Naive thymus-derived CD4-positive, alpha-beta T cell (primary cell): ENCODE measurements at regions of chr1 and their contacts with region 1.

Region 1: DNA sequence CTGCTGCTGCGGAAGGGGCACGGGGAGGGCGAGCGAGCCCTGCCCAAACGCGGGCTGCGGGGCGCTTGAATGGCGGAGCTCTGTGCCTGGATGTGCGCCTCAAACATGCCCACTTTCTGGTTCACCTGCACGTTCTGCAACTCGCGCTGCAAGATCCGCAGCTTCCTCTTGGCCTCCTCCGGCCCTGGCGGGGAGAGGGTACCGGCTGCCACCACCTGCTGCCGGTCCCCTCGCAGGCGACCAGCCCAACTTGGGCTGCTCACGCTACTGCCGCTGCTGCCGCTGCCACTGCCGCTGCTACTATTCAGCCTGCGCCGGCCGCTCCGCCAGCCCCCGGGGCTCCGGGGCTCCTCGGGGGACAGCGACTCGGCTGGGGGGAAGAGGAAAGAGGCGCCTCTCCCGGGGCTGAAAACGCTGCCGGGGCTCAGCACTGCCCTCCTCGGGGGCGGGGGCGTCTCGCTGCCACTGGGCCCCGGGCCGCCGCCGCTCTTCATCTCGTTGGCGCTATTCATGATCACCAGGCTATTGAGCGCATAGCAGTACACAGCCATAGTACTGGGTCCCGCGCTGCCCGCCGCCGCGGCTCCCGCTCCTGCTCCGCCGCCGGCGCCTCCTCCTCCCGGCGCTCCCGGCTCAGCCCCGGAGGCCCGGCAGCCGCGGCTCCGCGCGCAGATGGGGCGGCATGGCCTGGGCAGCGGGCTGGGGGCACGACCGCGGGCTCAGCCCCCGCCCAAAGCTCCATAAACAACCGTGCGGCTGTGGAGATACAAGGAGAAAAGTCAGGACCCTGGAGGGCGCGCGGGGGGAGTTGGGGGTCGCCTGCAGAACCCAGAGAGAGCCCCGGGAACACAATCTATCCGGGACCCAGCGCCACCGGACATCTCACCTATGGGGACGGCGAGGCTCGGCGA is 1.9 kb downstream of the ITPKB start:
- DNase-seq: peak in 7 of 9 donors; percentile 45 to 66 (median 59)
- ATAC-seq: peak; percentile 51
- H3K4me3 ChIP-seq: peak overlapping the region; percentile 99
- H3K4me3 Mint-ChIP-seq: peak overlapping the region; percentile 89 to 99 (median 93)
- H3K27ac ChIP-seq: peak overlapping the region; percentile 92
- H3K27ac Mint-ChIP-seq: peak overlapping the region; percentile 81 to 99 (median 97)
- H3K4me1 ChIP-seq: peaks cover 22 to 38% of the 10 kb centered on the region in 2 donors
- H3K4me1 Mint-ChIP-seq: peaks cover 14 to 54% (median 35%) of the 10 kb centered on the region in 7 donors
- H3K27me3 ChIP-seq: no peaks in the 10 kb centered on the region
- H3K27me3 Mint-ChIP-seq: no peaks in the 10 kb centered on the region

Region 2: DNA sequence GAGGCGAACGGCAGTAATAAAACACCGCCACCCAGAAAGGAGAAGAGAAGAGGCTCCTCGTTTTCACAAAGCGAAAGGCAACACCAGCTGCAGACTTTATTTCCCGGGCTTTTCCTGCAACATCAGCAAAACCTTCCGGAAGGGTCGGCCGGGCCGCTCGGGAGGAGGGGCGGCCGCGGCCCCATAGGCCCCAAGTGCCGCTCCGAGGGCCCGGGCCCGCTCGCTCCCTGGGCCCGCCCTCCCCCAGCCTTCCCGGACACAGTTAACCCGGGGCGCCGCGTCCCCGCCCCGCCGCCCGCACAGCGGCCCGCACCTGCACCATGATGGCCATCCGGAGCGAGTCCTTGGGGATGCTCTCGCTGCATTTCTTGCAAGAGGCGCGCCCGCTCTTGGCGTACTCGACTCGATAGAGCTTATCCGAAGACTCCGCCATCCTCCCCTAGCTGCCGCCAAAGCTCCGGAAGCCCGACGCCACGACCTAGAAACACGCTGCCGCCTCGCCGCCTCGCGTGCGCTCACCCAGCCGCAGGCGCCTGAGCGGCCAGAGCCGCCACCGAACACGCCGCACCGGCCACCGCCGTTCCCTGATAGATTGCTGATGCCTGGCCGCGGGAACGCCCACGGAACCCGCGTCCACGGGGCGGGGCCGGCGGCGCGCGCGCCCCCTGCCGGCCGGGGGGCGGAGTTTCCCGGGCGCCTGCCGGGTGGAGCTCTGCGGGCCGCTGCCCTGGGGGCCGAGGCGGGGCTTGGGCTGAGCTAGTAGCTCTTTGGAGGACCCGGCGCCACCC is 329.5 kb before region 1 on chr1 and contains the start of gene PARP1:
- CTCF ChIA-PET with region 1: no interaction called
- POLR2A ChIA-PET with region 1: interaction called, 3 read pairs
- intact Hi-C with region 1: loop called (anchors 5 kb)
- DNase-seq: peak; percentile 83 to 93 (median 89)
- ATAC-seq: peak; percentile 94
- H3K4me3 ChIP-seq: peak within 1 kb of the TSS; percentile 82
- H3K4me3 Mint-ChIP-seq: peak within 1 kb of the TSS; percentile 89 to 99 (median 94)
- H3K27ac ChIP-seq: peak within 1 kb of the TSS; percentile 74
- H3K27ac Mint-ChIP-seq: peak within 1 kb of the TSS; percentile 68 to 96 (median 93)
- H3K4me1 ChIP-seq: peaks cover 23 to 30% of the 10 kb centered on the region in 2 donors
- H3K4me1 Mint-ChIP-seq: peaks cover 37 to 46% (median 40%) of the 10 kb centered on the region in 7 donors
- H3K27me3 ChIP-seq: no peaks in the 10 kb centered on the region
- H3K27me3 Mint-ChIP-seq: peaks cover 0 to 3% (median 0%) of the 10 kb centered on the region in 5 donors
- total RNA-seq, gene PARP1: 63.6 to 165 (median 89.3) TPM

Region 3: DNA sequence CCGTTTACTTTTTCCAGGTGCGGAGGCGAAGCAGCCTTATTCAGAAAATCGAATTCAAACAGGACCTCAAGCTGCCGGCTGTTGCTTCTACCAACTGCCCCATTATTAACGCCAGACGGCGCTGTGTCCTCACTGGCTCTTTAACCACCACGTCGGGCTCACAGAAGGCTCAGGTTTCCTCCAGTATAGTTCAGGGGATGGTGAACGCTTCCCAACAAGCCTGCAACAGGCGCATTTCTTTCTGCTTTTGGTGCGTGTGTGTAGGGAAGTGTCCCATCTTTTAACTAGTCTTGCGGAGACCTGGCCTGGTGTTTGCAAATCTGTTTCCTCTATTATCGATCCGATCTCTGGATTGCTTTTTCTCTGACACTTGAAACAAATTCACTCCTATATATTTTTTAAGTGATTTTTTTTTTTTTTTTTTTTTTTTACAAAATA is 189.4 kb before region 1 on chr1:
- CTCF ChIA-PET with region 1: no interaction called
- POLR2A ChIA-PET with region 1: no interaction called
- intact Hi-C with region 1: no loop called
- DNase-seq: peak in 8 of 9 donors; percentile 17 to 56 (median 50)
- ATAC-seq: peak; percentile 75
- H3K4me3 ChIP-seq: no peak overlapping the region
- H3K4me3 Mint-ChIP-seq: peak overlapping the region in 9 of 10 donors; percentile 17 to 70 (median 51)
- H3K27ac ChIP-seq: no peak overlapping the region
- H3K27ac Mint-ChIP-seq: no peak overlapping the region
- H3K4me1 ChIP-seq: peaks cover 15 to 17% of the 10 kb centered on the region in 2 donors
- H3K4me1 Mint-ChIP-seq: peaks cover 0 to 19% (median 10%) of the 10 kb centered on the region in 7 donors
- H3K27me3 ChIP-seq: no peaks in the 10 kb centered on the region
- H3K27me3 Mint-ChIP-seq: peaks cover 37 to 77% (median 39%) of the 10 kb centered on the region in 5 donors

Region 4: DNA sequence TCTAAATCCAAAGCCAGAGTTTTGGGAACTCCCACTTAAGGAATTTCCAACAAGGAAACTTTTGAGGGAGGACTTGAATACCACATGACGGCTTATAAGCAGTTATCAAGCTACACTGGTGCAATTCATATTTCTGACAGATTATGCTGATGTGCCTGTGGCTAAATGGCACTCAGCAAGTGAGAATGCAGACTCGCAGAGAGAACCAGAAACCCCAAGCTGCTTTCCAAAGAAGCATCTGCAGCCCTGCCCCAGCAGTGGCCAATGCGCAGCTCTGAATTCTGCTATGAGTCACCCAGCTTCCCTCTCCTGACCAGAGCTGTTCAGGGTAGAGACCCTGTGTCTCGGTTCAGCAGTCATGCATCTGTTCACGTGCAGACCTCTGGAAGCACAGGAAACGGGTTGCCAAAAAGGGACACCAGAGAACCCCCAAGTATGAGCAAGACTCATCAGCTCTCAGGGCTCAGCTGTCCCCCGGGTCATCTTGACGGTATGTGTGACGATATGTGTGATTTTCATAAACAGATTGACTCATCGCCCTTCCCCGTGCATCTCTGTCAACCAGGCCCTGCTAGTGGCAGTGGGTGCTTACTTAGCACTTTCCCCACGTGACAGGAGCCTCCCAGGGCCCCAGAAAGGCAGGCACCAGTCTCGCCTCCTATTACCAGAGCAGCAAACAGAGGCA is 74.4 kb before region 1 on chr1:
- CTCF ChIA-PET with region 1: interaction called, 3 read pairs
- POLR2A ChIA-PET with region 1: interaction called, 6 read pairs
- intact Hi-C with region 1: loop called in 1 of 2 experiments (anchors 5 kb)
- DNase-seq: peak; percentile 47 to 96 (median 76)
- ATAC-seq: peak; percentile 92
- H3K4me3 ChIP-seq: peak overlapping the region; percentile 2
- H3K4me3 Mint-ChIP-seq: peak overlapping the region in 9 of 10 donors; percentile 63 to 81 (median 77)
- H3K27ac ChIP-seq: no peak overlapping the region
- H3K27ac Mint-ChIP-seq: peak overlapping the region in 1 of 9 donors; percentile 91
- H3K4me1 ChIP-seq: peaks cover 0 to 80% of the 10 kb centered on the region in 2 donors
- H3K4me1 Mint-ChIP-seq: peaks cover 0 to 92% (median 0%) of the 10 kb centered on the region in 7 donors
- H3K27me3 ChIP-seq: no peaks in the 10 kb centered on the region
- H3K27me3 Mint-ChIP-seq: no peaks in the 10 kb centered on the region

Region 5: DNA sequence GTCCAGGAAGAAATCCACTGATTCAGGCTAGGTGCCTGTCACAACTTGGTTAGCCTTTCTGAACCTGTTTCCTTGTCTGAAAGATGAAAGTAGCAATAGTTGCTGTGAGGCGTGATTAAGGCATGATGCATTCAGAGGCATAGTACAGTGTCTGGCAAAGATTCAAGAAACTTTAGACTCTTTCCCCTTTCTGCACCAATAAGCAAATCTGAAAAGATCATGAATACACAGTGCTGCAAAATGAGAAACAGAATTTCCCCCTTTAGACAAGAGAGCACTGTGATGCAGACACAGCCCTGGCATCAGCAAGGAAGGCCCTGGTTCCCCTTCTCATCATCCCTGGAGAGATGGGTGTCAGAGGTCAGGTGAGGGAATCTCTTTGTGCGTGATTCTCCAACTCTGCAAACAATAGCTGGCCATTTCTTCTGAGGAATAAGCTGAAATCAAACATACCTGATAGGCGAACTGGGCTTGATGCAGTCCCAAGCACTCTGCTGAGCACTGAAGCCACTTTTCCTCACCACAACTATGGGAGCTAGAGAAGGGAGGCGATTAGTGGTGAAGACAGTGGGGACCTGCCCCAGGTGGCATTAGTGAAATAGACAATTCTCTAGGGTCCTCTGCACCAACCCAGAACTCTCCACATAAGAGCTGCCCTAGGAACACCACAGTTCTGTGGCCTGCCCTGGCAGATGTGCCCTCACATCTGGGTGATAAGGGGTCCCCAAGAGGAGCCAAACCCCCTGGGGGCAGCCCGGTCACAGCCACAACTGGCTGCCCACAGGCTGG is 39.8 kb before region 1 on chr1:
- CTCF ChIA-PET with region 1: interaction called, 3 read pairs
- POLR2A ChIA-PET with region 1: interaction called, 14 read pairs
- intact Hi-C with region 1: loop called in 1 of 2 experiments (anchors 5 kb)
- DNase-seq: peak in 6 of 9 donors; percentile 47 to 76 (median 56)
- ATAC-seq: peak; percentile 81
- H3K4me3 ChIP-seq: no peak overlapping the region
- H3K4me3 Mint-ChIP-seq: peak overlapping the region in 9 of 10 donors; percentile 36 to 89 (median 70)
- H3K27ac ChIP-seq: peak overlapping the region; percentile 86
- H3K27ac Mint-ChIP-seq: peak overlapping the region; percentile 38 to 100 (median 98)
- H3K4me1 ChIP-seq: peaks cover 39 to 82% of the 10 kb centered on the region in 2 donors
- H3K4me1 Mint-ChIP-seq: peaks cover 68 to 100% (median 91%) of the 10 kb centered on the region in 7 donors
- H3K27me3 ChIP-seq: no peaks in the 10 kb centered on the region
- H3K27me3 Mint-ChIP-seq: no peaks in the 10 kb centered on the region

Region 6: DNA sequence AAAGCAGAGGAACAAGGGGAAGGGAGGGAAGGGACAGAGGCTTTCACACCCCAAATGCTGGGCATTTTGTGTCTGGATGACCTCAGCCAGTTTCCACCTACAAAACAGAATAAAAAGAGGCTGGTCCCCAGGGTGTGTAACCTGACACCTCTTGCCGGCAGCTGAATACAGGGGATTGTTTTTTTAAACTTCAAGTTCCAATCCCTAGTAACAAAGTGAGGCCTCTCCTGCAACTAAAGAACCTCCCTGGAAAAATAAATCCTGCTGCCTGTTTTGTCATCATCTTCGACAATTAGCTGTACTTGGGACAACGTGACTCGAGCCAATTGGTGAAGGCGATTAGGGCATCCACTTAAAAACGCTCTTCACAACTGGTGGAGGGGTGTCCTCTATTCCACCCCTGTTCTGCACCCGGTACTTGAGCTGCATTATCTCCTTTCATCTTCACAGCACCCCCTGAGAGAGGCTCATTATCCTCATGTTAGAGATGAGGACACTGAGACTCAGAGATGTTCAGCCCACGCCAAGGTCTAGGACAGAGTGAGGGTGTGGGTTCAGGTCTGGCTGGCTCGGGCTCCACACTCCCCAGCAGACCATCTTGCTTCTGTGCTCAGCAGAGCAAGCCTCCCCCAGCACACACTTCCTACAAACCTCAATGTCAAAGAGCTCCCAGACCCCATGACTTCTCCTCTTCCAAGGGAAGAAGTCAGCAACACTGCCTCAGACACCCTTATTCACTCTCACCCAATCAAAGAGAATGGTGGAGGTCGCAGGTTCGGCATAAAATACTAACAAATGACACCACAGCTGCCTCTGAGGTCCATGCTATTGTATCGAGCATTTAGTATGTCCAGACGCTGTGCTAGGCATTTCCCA is 13.3 kb before region 1 on chr1:
- CTCF ChIA-PET with region 1: interaction called, 3 read pairs
- POLR2A ChIA-PET with region 1: no interaction called
- intact Hi-C with region 1: loop called (anchors 1 kb)
- DNase-seq: peak in 5 of 9 donors; percentile 12 to 43 (median 25)
- ATAC-seq: peak; percentile 26
- H3K4me3 ChIP-seq: peak overlapping the region; percentile 51
- H3K4me3 Mint-ChIP-seq: peak overlapping the region; percentile 83 to 99 (median 92)
- H3K27ac ChIP-seq: peak overlapping the region; percentile 92
- H3K27ac Mint-ChIP-seq: peak overlapping the region; percentile 88 to 98 (median 94)
- H3K4me1 ChIP-seq: peaks cover 74 to 90% of the 10 kb centered on the region in 2 donors
- H3K4me1 Mint-ChIP-seq: peaks cover 77 to 99% (median 91%) of the 10 kb centered on the region in 7 donors
- H3K27me3 ChIP-seq: no peaks in the 10 kb centered on the region
- H3K27me3 Mint-ChIP-seq: no peaks in the 10 kb centered on the region

Region 7: GRCh38 chr1:226776066-226776465 is 38.9 kb after region 1 on chr1:
- CTCF ChIA-PET with region 1: no interaction called
- POLR2A ChIA-PET with region 1: no interaction called
- intact Hi-C with region 1: no loop called
- DNase-seq: no peak
- ATAC-seq: no peak
- H3K4me3 ChIP-seq: no peak overlapping the region
- H3K4me3 Mint-ChIP-seq: no peak overlapping the region
- H3K27ac ChIP-seq: no peak overlapping the region
- H3K27ac Mint-ChIP-seq: no peak overlapping the region
- H3K4me1 ChIP-seq: no peaks in the 10 kb centered on the region
- H3K4me1 Mint-ChIP-seq: peaks cover 0 to 17% (median 9%) of the 10 kb centered on the region in 7 donors
- H3K27me3 ChIP-seq: no peaks in the 10 kb centered on the region
- H3K27me3 Mint-ChIP-seq: peaks cover 0 to 12% (median 0%) of the 10 kb centered on the region in 5 donors

Region 8: DNA sequence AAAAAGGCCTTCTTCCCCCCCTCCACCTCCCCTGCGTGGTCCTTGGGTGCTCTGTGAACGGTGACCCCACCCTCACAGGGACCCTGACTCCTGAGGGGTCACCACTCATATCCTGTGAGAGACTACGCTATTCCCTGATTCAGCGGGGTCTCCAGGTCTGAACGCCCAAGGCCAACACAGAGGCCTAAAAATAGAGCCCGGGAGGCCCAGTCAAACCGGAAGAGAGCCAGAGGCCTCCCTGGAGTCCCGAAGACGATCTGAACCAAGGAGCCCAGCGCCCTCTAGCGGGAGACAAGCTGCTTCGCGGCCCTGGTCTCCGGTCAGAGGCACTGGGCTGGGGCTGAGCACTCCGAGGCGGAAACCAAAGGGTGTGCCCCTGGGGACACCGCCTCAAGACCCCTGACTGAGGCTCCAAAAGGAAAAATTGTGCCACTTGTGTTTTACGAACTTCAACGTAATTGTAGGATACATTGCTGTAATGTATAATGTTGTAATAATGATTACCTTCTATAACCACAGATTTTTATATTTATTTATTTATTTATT is 90.9 kb after region 1 on chr1:
- CTCF ChIA-PET with region 1: interaction called, 4 read pairs
- POLR2A ChIA-PET with region 1: interaction called, 15 read pairs
- intact Hi-C with region 1: loop called (anchors 1 to 2 kb)
- DNase-seq: peak; percentile 82 to 94 (median 91)
- ATAC-seq: peak; percentile 99
- H3K4me3 ChIP-seq: peak overlapping the region; percentile 34
- H3K4me3 Mint-ChIP-seq: peak overlapping the region; percentile 35 to 79 (median 66)
- H3K27ac ChIP-seq: peak overlapping the region; percentile 59
- H3K27ac Mint-ChIP-seq: peak overlapping the region; percentile 80 to 95 (median 87)
- H3K4me1 ChIP-seq: peaks cover 9 to 11% of the 10 kb centered on the region in 2 donors
- H3K4me1 Mint-ChIP-seq: peaks cover 24 to 54% (median 45%) of the 10 kb centered on the region in 7 donors
- H3K27me3 ChIP-seq: no peaks in the 10 kb centered on the region
- H3K27me3 Mint-ChIP-seq: peaks cover 0 to 4% (median 0%) of the 10 kb centered on the region in 5 donors

Region 9: GRCh38 chr1:228082135-228082891 is 1345.2 kb after region 1 on chr1 and contains the start of gene ARF1:
- CTCF ChIA-PET with region 1: no interaction called
- POLR2A ChIA-PET with region 1: no interaction called
- intact Hi-C with region 1: loop called in 1 of 2 experiments (anchors 10 kb)
- DNase-seq: peak; percentile 89 to 99 (median 96)
- ATAC-seq: peak; percentile 97
- H3K4me3 ChIP-seq: peak within 1 kb of the TSS; percentile 88
- H3K4me3 Mint-ChIP-seq: peak within 1 kb of the TSS; percentile 89 to 97 (median 95)
- H3K27ac ChIP-seq: peak within 1 kb of the TSS; percentile 97
- H3K27ac Mint-ChIP-seq: peak within 1 kb of the TSS; percentile 76 to 97 (median 95)
- H3K4me1 ChIP-seq: peaks cover 41 to 43% of the 10 kb centered on the region in 2 donors
- H3K4me1 Mint-ChIP-seq: peaks cover 36 to 66% (median 52%) of the 10 kb centered on the region in 7 donors
- H3K27me3 ChIP-seq: no peaks in the 10 kb centered on the region
- H3K27me3 Mint-ChIP-seq: no peaks in the 10 kb centered on the region
- total RNA-seq, gene ARF1: 198 to 390 (median 259) TPM